ENCODE measurements at regions of chr5 and their contacts with region 1.

Region 1: GRCh38 chr5:11494340-11494739 is 409.9 kb downstream of the CTNND2 start:
- H3K4me3 Mint-ChIP-seq: no peak overlapping the region
- H3K27ac Mint-ChIP-seq: no peak overlapping the region
- H3K4me1 Mint-ChIP-seq: no peaks in the 10 kb centered on the region
- H3K27me3 Mint-ChIP-seq: peaks cover 2% of the 10 kb centered on the region

Region 2: DNA sequence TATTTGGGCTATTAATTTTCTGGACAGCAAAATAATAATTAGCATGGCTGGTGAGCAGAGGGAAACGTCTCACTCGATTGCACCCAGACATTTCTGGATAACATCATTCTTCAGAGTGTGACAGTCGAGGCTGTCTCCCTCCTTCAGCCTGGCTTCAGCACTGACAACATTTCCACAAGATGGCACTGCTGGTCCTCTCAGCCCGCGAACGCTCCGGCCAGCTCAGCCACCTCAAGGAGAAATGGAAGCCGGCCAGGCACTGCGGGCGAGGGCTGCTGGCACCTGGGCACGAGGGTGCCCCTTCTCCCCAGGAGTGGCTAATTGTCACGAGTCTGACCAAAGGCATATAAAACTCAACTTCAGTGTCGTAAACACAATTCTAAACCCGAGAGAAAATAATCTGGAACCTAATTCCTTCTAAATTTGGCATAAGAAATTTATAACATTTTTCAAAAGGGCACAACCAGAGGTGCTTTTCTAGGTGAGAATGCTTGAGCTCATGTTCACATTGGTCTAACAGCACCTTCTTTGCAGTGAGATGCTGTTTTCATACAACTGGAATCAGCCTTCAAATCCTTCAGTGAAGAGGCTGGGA is 799.2 kb before region 1 on chr5:
- intact Hi-C with region 1: loop called (anchors 10 kb)
- H3K4me3 Mint-ChIP-seq: no peak overlapping the region
- H3K27ac Mint-ChIP-seq: peak overlapping the region; percentile 60
- H3K4me1 Mint-ChIP-seq: peaks cover 40% of the 10 kb centered on the region
- H3K27me3 Mint-ChIP-seq: no peaks in the 10 kb centered on the region

Region 3: GRCh38 chr5:11268891-11269290 is 225.4 kb before region 1 on chr5:
- intact Hi-C with region 1: loop called (anchors 5 kb)
- H3K4me3 Mint-ChIP-seq: no peak overlapping the region
- H3K27ac Mint-ChIP-seq: no peak overlapping the region
- H3K4me1 Mint-ChIP-seq: no peaks in the 10 kb centered on the region
- H3K27me3 Mint-ChIP-seq: no peaks in the 10 kb centered on the region

Measured in dendritic cell treated with granulocyte-macrophage colony-stimulating factor and Interleukin-4, amounts not matched to agents 40 ng/mL and 50 ng/mL, for 4 days (primary cell).